ENCODE measurements at regions of chr10 and their contacts with region 1.

Region 1: DNA sequence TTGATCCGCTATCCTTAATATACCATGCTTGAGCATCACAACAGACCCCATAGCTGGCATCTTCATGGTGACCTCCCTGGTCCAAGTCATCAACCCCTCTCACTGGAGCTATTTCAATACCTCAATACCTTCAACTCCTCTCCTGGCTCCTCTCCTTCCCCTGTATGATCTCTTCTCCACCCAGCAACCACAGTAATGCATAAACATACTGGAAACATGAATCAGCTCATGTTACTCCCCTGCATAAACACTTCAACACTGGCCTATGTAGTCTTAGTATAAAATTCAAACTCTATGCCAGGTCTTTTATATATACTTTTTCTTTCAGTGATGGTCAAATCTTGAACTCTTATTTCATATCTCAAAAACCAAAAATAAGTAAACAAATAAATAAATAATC is 31.8 kb upstream of the TMEM273 start:
- DNase-seq: no peak
- ATAC-seq: no peak
- H3K4me3 ChIP-seq: no peak overlapping the region
- H3K27ac ChIP-seq: no peak overlapping the region
- H3K4me1 ChIP-seq: peaks cover 0 to 11% (median 1%) of the 10 kb centered on the region in 9 donors
- H3K27me3 ChIP-seq: no peaks in the 10 kb centered on the region
- CTCF ChIP-seq: no peak

Region 2: DNA sequence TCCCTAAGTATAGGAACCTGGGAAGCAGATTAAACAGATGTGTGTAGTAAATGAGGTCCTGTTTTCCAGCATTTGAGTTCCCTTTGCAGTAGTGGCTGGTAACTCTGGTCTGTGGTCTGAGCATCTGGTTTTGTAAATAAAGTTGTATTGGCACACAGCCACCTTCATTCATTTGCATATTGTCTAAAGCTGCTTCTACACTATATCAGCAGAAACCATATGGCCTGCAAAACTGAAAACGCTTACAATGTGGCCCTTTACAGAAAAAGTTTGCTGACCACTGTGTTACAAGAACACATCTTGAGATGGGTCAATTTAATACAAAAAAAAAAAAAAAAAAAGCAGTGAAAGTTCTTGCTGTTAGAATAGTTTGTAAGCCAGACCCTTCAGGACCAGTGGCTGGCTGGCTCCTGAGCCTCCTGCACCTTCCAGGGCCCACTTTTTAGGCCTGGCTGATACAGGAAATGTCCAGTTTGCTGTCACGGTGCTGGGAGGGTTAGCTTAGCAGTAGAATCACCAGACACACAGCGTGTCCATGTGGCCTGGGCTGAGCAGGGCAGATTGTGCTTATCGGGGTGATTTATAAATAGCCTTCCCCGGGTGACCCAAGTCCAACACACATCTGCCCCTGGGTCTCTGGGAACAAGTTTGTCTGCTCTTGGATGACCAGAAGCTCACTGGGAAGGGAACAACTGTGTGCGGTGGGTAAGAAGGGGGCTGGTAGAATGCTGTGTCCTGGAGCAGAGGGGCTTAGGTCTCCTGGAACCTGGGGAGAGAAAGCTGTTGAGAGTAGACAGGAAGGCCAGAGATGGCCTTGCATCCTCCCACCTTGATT is 80.3 kb after region 1 on chr10:
- intact Hi-C with region 1: loop called in 4 of 10 experiments (anchors 5 to 10 kb)
- DNase-seq: peak; percentile 54 to 81
- ATAC-seq: peak; percentile 70 to 86 (median 79)
- H3K4me3 ChIP-seq: peak overlapping the region; percentile 8 to 64 (median 46)
- H3K27ac ChIP-seq: peak overlapping the region; percentile 81 to 98 (median 94)
- H3K4me1 ChIP-seq: peaks cover 0 to 98% (median 48%) of the 10 kb centered on the region in 9 donors
- H3K27me3 ChIP-seq: no peaks in the 10 kb centered on the region
- CTCF ChIP-seq: peak in 5 of 9 donors; percentile 6 to 46 (median 42)

Region 3: GRCh38 chr10:49362596-49363260 is 142.7 kb after region 1 on chr10:
- intact Hi-C with region 1: loop called in 1 of 10 experiments (anchors 10 kb)
- DNase-seq: no peak
- ATAC-seq: no peak
- H3K4me3 ChIP-seq: no peak overlapping the region
- H3K27ac ChIP-seq: no peak overlapping the region
- H3K4me1 ChIP-seq: peaks cover 11 to 33% (median 18%) of the 10 kb centered on the region in 9 donors
- H3K27me3 ChIP-seq: peaks cover 0 to 4% (median 0%) of the 10 kb centered on the region in 7 donors
- CTCF ChIP-seq: no peak

Region 4: DNA sequence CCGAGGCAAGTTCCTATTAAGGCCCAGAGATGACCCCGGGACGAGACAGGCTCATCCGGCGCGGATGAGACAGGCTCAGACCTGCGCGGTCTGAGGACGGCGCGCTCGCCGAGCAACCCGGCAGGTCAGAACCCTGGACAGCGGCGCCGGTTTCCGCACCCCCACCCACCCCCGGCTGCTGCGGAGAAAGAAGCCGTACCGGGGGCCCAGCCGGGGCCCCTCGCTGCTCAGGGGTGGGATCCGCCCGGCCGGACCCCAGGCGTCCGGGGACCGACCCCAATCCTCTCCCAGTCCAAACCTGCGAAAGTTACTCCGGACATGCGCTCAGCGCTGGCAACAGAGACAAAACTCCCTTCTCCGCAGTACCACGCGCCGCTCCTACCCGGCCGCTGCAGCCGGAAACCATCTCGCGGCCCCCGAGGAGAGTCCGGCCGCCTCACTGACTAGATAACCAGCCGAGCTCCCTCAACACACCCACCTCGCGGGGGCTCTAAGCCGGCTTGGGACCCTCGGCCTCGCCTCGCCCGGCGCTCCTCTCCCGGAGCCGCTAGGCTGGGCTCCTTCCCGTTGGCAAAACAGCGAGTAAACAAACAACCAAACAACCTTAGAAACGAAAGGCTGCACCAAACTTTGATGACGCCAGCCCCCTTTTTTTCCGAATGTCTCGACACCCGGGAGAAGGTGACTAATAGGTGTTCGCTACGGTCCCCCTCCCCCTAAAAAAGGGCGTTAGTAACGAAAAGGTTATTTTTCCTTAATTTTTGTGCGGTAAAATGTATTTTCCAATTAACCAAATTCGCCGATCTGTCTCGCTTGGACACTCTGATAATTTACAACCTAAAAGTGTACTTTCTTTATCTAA is 178.2 kb after region 1 on chr10:
- intact Hi-C with region 1: loop called in 1 of 10 experiments (anchors 10 kb)
- DNase-seq: peak; percentile 61 to 67
- ATAC-seq: peak; percentile 89 to 97 (median 92)
- H3K4me3 ChIP-seq: peak overlapping the region in 9 of 10 donors; percentile 24 to 48 (median 41)
- H3K27ac ChIP-seq: no peak overlapping the region
- H3K4me1 ChIP-seq: peaks cover 9 to 41% (median 34%) of the 10 kb centered on the region in 9 donors
- H3K27me3 ChIP-seq: peaks cover 46 to 100% (median 97%) of the 10 kb centered on the region in 7 donors
- CTCF ChIP-seq: no peak

Region 5: GRCh38 chr10:49518982-49519578 is 299.0 kb after region 1 on chr10:
- intact Hi-C with region 1: loop called in 1 of 10 experiments (anchors 10 kb)
- DNase-seq: peak in 1 of 2 donors; percentile 19
- ATAC-seq: peak in 7 of 8 donors; percentile 46 to 82 (median 66)
- H3K4me3 ChIP-seq: no peak overlapping the region
- H3K27ac ChIP-seq: no peak overlapping the region
- H3K4me1 ChIP-seq: peaks cover 0 to 30% (median 18%) of the 10 kb centered on the region in 9 donors
- H3K27me3 ChIP-seq: no peaks in the 10 kb centered on the region
- CTCF ChIP-seq: peak; percentile 51 to 75 (median 65)

Measured in heart right ventricle (tissue), 16 donors.